Endothelial cell of umbilical vein (primary cell): ENCODE measurements at regions of chr14 and their contacts with region 1.

Region 1: DNA sequence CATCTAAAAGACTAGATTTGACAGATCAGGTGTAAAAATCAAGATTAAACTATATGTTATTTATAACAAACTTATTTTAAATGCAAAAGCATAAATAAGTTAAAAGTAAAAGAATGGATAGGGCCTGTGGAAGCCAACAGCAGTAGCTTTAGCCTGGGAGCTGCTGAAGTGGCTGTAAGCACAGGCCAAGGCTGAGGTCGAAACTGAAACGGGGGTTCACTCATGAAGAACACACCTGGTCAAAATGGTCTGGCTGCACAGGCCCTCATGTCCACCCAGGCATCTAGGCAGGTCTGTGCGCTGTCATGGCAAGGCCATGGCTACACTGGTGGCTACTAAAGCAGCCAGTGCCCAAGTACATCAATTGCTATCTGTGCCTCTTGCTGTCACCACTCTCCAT is 23.1 kb downstream of the CATSPERB start:
- DNase-seq: no peak
- H3K4me3 ChIP-seq: no peak overlapping the region
- H3K27ac ChIP-seq: no peak overlapping the region
- H3K4me1 ChIP-seq: no peaks in the 10 kb centered on the region
- H3K27me3 ChIP-seq: no peaks in the 10 kb centered on the region
- CTCF ChIP-seq: no peak
- POLR2A ChIP-seq: no peak

Region 2: GRCh38 chr14:91810699-91811098 is 101.9 kb after region 1 on chr14:
- CTCF ChIA-PET with region 1: no interaction called
- POLR2A ChIA-PET with region 1: no interaction called
- dilution Hi-C with region 1: no loop called
- intact Hi-C with region 1: loop called (anchors 1 kb)
- DNase-seq: no peak
- H3K4me3 ChIP-seq: no peak overlapping the region
- H3K27ac ChIP-seq: no peak overlapping the region
- H3K4me1 ChIP-seq: no peaks in the 10 kb centered on the region
- H3K27me3 ChIP-seq: peaks cover 0 to 3% of the 10 kb centered on the region in 2 experiments
- CTCF ChIP-seq: no peak
- POLR2A ChIP-seq: no peak